ENCODE measurements at regions of chr3 and their contacts with region 1.

Region 1: DNA sequence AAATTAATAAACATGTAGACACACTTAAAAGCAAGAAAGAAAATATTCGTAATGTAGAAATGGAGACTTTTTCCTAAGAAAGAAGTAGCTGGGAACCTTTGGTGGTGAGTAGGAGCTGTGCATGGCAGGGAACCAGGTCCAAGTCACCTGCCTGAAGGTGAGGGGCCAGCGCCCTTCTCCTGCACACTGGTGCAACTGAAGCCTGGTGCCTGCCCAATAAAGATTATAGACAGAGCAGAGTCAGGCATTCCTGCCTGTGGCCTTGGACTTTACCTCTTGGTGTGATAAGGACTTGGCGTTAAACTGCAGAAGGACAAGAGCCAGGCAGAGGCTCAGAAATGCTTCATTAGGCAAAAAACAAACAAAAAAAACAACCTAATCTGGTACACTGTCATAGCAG is 14.2 kb downstream of the CFAP91 start:
- DNase-seq: no peak
- ATAC-seq: peak; percentile 54

Region 2: GRCh38 chr3:119810018-119810435 is 93.0 kb after region 1 on chr3:
- intact Hi-C with region 1: loop called (anchors 10 kb)
- DNase-seq: peak; percentile 75
- ATAC-seq: peak; percentile 30

Measured in Right ventricle myocardium inferior (tissue), 1 donor.